PC-3 (cell line): ENCODE measurements at regions of chr6 and their contacts with region 1.

Region 1: GRCh38 chr6:158660333-158660754 is 10.5 kb downstream of the SYTL3 start:
- DNase-seq: peak; percentile 68
- ATAC-seq: peak; percentile 48
- H3K4me3 ChIP-seq: no peak overlapping the region
- H3K27ac ChIP-seq: no peak overlapping the region
- H3K4me1 ChIP-seq: peaks cover 15% of the 10 kb centered on the region
- H3K27me3 ChIP-seq: no peaks in the 10 kb centered on the region
- CTCF ChIP-seq: peak; percentile 71

Region 2: GRCh38 chr6:158752613-158753012 is 92.3 kb after region 1 on chr6:
- CTCF ChIA-PET with region 1: no interaction called
- POLR2A ChIA-PET with region 1: interaction called, 17 read pairs
- intact Hi-C with region 1: no loop called
- DNase-seq: no peak
- ATAC-seq: no peak
- H3K4me3 ChIP-seq: no peak overlapping the region
- H3K27ac ChIP-seq: no peak overlapping the region
- H3K4me1 ChIP-seq: no peaks in the 10 kb centered on the region
- H3K27me3 ChIP-seq: no peaks in the 10 kb centered on the region
- CTCF ChIP-seq: no peak

Region 3: GRCh38 chr6:158772851-158773371 is 112.6 kb after region 1 on chr6:
- CTCF ChIA-PET with region 1: no interaction called
- POLR2A ChIA-PET with region 1: no interaction called
- intact Hi-C with region 1: no loop called
- DNase-seq: no peak
- ATAC-seq: no peak; the same call in 1 of the 2 replicates
- H3K4me3 ChIP-seq: no peak overlapping the region
- H3K27ac ChIP-seq: no peak overlapping the region
- H3K4me1 ChIP-seq: no peaks in the 10 kb centered on the region
- H3K27me3 ChIP-seq: no peaks in the 10 kb centered on the region
- CTCF ChIP-seq: no peak